Colonic mucosa (tissue), 4 donors: ENCODE measurements at regions of chr3 and their contacts with region 1.

Region 1: GRCh38 chr3:53709860-53710674 is 136.2 kb downstream of the CHDH start:
- DNase-seq: peak; percentile 62
- H3K4me3 ChIP-seq: no peak overlapping the region
- H3K27ac ChIP-seq: no peak overlapping the region
- H3K4me1 ChIP-seq: no peaks in the 10 kb centered on the region
- H3K27me3 ChIP-seq: no peaks in the 10 kb centered on the region
- CTCF ChIP-seq: peak; percentile 76

Region 2: DNA sequence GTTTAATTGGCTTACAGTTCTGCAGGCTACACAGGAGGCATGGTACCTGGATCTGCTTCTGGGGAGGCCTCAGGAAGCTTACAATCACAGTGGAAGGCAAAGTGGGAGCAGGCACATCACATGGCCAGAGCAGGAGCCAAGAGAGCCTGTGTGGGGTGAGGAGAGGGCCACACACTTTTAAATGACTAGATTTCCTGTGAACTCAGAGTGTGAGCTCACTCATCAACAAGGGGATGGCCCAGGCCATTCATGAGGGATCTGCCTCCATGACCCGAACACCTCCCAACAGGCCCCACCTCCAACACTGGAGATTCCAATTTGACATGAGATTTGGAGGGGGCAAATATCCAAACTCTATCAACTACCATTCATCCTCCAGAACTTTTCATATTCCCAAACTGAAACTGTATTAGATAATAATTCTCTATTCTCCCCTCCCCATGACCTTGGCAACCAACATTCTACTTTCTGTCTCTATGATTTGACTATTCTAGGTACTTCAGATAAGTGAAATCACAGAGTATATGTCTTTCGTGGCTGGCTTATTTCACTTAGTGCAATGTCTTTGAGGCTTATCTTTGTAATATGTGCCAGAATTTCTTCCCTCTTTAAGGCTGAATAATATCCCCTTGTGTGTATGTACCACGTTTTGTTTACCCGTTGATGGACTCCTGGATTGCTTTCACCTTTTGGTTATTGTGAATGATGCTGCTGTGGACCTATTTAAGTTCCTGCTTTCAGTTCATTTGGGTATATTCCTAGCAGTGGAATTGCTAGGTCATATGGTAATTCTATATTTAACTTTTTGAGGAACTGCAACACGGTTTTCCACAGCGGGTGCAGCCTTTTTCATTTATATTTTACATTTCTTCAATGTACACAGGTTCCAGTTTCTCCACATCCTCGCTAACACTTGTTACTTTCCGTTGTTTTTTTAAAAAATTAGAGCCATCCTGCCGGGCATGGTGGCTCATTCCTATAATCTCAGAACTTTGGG is 498.1 kb before region 1 on chr3:
- intact Hi-C with region 1: loop called (anchors 5 kb)
- DNase-seq: no peak
- H3K4me3 ChIP-seq: no peak overlapping the region
- H3K27ac ChIP-seq: no peak overlapping the region
- H3K4me1 ChIP-seq: no peaks in the 10 kb centered on the region
- H3K27me3 ChIP-seq: no peaks in the 10 kb centered on the region
- CTCF ChIP-seq: no peak

Region 3: GRCh38 chr3:53295410-53295809 is 414.7 kb before region 1 on chr3:
- intact Hi-C with region 1: loop called (anchors 5 kb)
- DNase-seq: no peak
- H3K4me3 ChIP-seq: no peak overlapping the region
- H3K27ac ChIP-seq: no peak overlapping the region
- H3K4me1 ChIP-seq: no peaks in the 10 kb centered on the region
- H3K27me3 ChIP-seq: no peaks in the 10 kb centered on the region
- CTCF ChIP-seq: no peak

Region 4: DNA sequence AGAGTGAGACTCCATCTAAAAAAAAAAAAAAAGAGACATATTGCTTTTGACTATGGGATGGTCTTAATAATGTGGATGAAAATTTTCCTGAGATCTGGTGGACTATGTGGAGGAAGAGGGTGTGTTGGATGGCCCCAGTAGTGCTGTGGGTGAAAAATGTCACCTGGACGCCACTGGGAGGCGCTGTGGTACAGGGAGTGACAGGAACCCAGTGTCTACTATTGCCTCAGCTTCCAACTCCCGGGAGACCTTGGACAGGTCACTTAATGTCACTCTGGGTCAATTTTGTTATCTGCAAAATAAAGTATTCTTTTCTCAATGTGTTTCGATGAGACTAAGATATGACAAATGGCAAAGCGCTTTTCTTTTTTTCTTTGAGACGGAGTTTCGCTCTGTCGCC is 335.0 kb before region 1 on chr3:
- intact Hi-C with region 1: loop called (anchors 2 kb)
- DNase-seq: peak; percentile 76
- H3K4me3 ChIP-seq: no peak overlapping the region
- H3K27ac ChIP-seq: no peak overlapping the region
- H3K4me1 ChIP-seq: no peaks in the 10 kb centered on the region
- H3K27me3 ChIP-seq: no peaks in the 10 kb centered on the region
- CTCF ChIP-seq: peak; percentile 70

Region 5: GRCh38 chr3:53677413-53677812 is 32.7 kb before region 1 on chr3:
- intact Hi-C with region 1: no loop called
- DNase-seq: no peak
- H3K4me3 ChIP-seq: no peak overlapping the region
- H3K27ac ChIP-seq: no peak overlapping the region
- H3K4me1 ChIP-seq: no peaks in the 10 kb centered on the region
- H3K27me3 ChIP-seq: no peaks in the 10 kb centered on the region
- CTCF ChIP-seq: no peak

Region 6: GRCh38 chr3:53921296-53921695 is 211.2 kb after region 1 on chr3:
- intact Hi-C with region 1: no loop called
- DNase-seq: no peak
- H3K4me3 ChIP-seq: no peak overlapping the region
- H3K27ac ChIP-seq: no peak overlapping the region
- H3K4me1 ChIP-seq: no peaks in the 10 kb centered on the region
- H3K27me3 ChIP-seq: no peaks in the 10 kb centered on the region
- CTCF ChIP-seq: peak; percentile 32